ENCODE measurements at regions of chr1 and their contacts with region 1.

Region 1: GRCh38 chr1:30801771-30802198 is 44.2 kb upstream of the LAPTM5 start:
- DNase-seq: peak; percentile 77 to 90 (median 87)
- ATAC-seq: peak; percentile 81
- H3K4me3 ChIP-seq: no peak overlapping the region
- H3K4me1 ChIP-seq: peaks cover 4% of the 10 kb centered on the region
- CTCF ChIP-seq: peak; percentile 87

Region 2: DNA sequence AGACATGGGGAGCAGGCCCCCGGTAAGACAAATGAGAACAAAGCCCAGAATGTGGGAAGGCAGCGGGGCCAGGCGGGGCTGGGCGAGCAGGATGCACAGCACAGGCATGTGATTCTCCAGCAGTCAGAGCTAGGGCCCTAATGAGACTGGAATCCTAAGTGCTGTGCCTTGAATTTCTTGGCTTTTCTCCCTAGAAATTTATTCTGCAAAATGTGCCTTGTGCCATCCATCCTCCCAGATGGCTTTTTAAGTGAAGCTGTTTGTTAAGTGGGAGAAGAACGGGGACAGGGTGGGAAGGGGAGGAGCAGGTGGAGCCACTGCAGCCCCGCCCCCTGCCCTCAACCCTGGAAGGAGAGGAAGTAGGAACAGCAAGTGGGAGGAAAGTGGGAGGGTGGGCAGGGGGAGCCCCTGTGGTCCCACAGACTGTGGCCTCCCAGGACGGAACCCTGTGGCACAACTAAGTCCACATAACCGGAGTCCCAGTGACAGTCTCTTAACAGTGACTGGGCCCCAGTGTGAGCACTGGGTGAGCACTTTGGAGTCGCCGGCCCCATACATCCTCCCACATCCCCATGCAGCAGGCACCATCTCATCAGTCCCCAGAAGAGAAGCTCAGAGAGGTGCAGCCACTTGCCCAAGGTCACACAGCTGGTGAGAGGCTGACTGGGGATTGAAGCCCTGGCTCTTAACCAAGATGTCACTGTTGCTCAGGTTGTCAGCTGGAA is 295.3 kb before region 1 on chr1:
- intact Hi-C with region 1: no loop called
- DNase-seq: no peak
- ATAC-seq: no peak
- H3K4me3 ChIP-seq: no peak overlapping the region
- H3K4me1 ChIP-seq: no peaks in the 10 kb centered on the region
- CTCF ChIP-seq: no peak

Region 3: GRCh38 chr1:30763651-30764248 is 38.0 kb before region 1 on chr1:
- intact Hi-C with region 1: no loop called
- DNase-seq: peak in 1 of 3 donors; percentile 49
- ATAC-seq: no peak
- H3K4me3 ChIP-seq: no peak overlapping the region
- H3K4me1 ChIP-seq: no peaks in the 10 kb centered on the region
- CTCF ChIP-seq: no peak

Region 4: DNA sequence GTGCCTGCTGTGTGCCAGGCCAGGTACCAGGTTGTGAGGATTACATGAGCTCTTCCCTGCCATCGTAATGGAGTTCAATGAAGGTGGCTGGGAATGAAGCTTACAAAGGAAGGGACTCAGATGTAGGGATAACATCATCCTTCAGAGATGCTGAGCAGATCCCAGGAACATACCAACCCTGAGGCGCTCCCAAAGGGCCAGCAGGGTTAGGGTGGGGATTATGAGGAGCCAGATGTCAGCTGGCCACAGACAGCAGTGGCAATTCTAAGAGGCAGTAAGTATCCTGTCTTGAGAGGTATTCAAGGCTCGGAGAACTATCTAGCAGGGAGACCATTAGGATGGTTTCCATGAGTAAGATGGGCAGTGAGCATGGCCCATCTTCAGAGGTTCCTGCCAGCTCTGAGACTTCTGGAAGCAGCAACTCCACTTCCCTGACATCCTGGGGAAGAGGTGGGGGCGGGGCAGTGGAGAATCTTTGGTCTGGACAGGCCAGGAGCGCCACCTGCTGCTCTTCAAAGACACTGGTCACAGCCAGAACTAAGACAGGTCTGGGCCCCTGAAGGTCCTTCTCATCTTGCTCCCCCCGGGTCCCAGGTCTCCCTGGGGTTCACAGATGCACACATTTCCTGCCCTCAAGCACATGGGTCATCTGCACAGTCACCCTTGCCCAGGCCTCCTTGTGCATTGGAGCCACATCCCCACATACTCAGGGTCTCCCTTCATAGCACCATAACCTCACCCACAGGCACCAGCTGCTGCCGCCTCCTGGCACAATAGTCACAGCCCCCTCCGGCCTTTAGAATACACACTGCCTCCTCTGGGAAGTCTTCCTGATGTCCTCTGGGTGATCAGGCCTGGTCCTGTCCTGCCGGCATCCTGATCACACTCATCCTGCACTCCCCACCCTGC is 109.5 kb after region 1 on chr1:
- intact Hi-C with region 1: loop called (anchors 2 to 5 kb)
- DNase-seq: peak; percentile 86 to 97 (median 90)
- ATAC-seq: peak; percentile 81
- H3K4me3 ChIP-seq: no peak overlapping the region
- H3K4me1 ChIP-seq: peaks cover 11% of the 10 kb centered on the region
- CTCF ChIP-seq: peak; percentile 47

Region 5: DNA sequence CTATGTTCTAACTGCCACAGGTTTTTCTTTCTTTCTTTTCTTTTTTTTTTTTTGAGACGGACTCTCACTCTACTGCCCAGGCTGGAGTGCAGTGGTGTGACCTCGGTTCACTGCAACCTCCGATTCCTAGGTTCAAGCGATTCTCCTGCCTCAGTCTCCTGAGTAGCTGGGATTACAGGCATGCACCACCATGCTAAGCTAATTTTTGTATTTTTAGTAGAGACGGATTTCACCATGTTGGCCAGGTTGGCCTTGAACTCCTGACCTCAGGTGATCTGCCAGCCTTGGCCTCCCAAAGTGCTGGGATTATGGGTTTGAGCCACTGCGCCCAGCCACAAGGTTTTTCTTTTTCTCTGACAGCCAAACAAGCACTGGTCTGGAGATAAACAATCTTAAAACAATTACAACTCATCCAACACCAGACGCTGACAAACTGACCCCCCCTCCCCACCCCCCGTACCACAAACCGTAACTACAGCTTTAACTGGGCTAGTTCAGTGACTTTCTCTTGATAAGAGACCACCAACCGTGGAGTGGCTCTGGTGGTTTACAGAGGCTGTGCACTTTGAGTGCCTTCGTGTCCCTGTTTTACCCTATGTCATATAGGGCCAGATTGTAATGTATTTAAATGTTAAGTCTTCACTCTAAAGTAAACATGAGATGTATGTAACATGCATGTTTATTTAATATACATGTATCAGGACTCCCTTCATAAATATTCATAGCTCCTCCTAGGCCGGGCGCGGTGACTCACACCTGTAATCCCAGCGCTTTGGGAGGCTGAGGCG is 283.2 kb after region 1 on chr1:
- intact Hi-C with region 1: no loop called
- DNase-seq: no peak
- ATAC-seq: no peak
- H3K4me3 ChIP-seq: no peak overlapping the region
- H3K4me1 ChIP-seq: no peaks in the 10 kb centered on the region
- CTCF ChIP-seq: no peak

Measured in mucosa of descending colon (tissue), 3 donors.